Activated CD4-positive, alpha-beta memory T cell treated with anti-CD3 and anti-CD28 coated beads for 36 hours (primary cell): ENCODE measurements at regions of chr2 and their contacts with region 1.

Region 1: GRCh38 chr2:38653715-38654527 is 12.0 kb upstream of the GALM start:
- DNase-seq: peak; percentile 89
- H3K4me3 Mint-ChIP-seq: peak overlapping the region; percentile 63
- H3K27ac Mint-ChIP-seq: peak overlapping the region; percentile 91
- H3K4me1 Mint-ChIP-seq: peaks cover 68% of the 10 kb centered on the region
- H3K27me3 Mint-ChIP-seq: no peaks in the 10 kb centered on the region

Region 2: GRCh38 chr2:38682008-38682575 is 28.2 kb after region 1 on chr2:
- CTCF ChIA-PET with region 1: interaction called, 10 read pairs
- POLR2A ChIA-PET with region 1: interaction called, 12 read pairs
- intact Hi-C with region 1: loop called (anchors 1 kb)
- DNase-seq: peak; percentile 38
- H3K4me3 Mint-ChIP-seq: peak overlapping the region; percentile 63
- H3K27ac Mint-ChIP-seq: peak overlapping the region; percentile 84
- H3K4me1 Mint-ChIP-seq: peaks cover 78% of the 10 kb centered on the region
- H3K27me3 Mint-ChIP-seq: no peaks in the 10 kb centered on the region

Region 3: DNA sequence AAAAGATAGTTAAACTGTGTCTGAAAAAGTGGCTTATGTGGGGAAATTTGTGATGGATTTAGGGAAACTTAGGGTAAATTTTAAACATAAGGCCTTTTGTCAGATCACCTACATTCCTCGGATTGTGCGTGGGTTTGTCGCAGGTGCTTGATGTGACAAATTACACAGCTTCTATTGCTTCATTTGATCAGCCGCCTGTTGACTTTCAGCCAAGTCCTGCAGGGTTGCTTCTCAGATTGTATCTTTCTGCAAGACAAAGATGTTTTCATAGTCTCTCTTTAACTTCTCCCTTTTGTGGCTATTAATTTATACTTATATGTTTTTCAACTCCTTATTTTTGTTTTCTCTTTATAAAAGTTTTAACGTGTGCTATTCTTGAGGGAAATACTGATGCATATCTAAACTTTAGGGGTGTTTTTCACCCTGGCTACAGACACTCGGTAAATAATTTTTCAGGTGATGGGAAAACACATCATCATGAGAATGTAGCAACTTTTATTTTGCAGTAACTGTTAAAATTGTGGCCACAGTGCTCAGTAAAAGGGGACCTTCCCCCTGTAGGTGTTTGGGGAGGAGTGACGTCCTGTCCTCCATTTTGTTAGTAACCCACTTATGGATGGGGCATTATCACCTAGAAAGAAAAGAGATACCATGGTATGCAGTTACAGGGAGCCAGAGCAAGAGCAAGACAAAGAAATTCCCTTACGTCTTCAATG is 43.4 kb after region 1 on chr2:
- CTCF ChIA-PET with region 1: interaction called, 4 read pairs
- POLR2A ChIA-PET with region 1: interaction called, 5 read pairs
- intact Hi-C with region 1: loop called (anchors 1 kb)
- DNase-seq: peak; percentile 71
- H3K4me3 Mint-ChIP-seq: peak overlapping the region; percentile 34
- H3K27ac Mint-ChIP-seq: peak overlapping the region; percentile 94
- H3K4me1 Mint-ChIP-seq: peaks cover 86% of the 10 kb centered on the region
- H3K27me3 Mint-ChIP-seq: no peaks in the 10 kb centered on the region

Region 4: DNA sequence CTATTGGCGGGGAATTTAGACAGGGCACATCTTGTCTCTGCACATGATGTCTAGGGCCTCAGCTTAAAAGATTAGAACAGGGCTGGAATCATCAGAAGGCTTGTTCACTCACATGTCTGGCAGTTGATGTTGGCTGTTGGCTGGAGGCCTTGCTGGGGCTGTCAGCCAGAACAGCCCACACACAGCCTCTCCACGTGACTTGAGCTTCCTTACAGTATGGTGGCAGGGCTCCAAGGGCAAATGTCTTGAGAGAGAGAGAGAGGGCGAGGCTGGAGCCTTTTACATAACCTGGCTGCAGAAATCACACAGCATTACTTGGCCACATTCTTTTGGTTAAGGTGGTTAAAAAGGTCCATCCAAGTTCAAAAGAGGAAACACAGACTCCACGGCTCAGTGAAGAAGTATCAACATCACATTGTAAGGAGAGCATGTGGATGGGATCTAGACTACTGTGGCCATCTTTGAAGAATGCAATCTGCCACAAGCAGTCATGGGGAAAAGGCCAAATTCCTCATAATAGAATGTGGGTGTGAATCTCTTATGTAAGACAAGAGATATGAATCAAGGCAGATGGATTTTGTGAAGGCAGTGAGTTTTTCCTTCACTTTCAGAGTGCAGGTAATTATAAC is 66.8 kb after region 1 on chr2:
- CTCF ChIA-PET with region 1: interaction called, 17 read pairs
- POLR2A ChIA-PET with region 1: interaction called, 6 read pairs
- intact Hi-C with region 1: loop called (anchors 1 kb)
- DNase-seq: peak; percentile 47
- H3K4me3 Mint-ChIP-seq: peak overlapping the region; percentile 25
- H3K27ac Mint-ChIP-seq: peak overlapping the region; percentile 84
- H3K4me1 Mint-ChIP-seq: peaks cover 72% of the 10 kb centered on the region
- H3K27me3 Mint-ChIP-seq: no peaks in the 10 kb centered on the region

Region 5: DNA sequence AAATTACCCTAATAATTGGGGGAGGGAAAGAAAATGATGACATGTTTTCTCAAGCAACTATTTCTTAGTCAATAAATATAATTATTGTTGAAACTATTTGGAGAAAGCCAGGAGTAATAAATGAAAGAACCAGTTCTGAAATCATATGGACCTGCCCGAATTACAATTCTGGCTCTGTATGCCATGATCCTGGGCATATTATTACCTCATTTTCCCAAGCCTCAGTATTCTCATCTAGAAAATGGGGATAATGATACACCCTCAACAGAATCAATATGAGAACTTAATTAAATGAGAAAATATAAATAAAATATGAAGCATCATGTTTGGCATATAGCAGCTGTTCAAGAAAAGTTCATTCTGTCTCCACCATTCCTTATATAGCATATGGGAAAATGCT is 258.7 kb after region 1 on chr2:
- CTCF ChIA-PET with region 1: no interaction called
- POLR2A ChIA-PET with region 1: no interaction called
- intact Hi-C with region 1: no loop called
- DNase-seq: no peak
- H3K4me3 Mint-ChIP-seq: no peak overlapping the region
- H3K27ac Mint-ChIP-seq: no peak overlapping the region
- H3K4me1 Mint-ChIP-seq: peaks cover 14% of the 10 kb centered on the region
- H3K27me3 Mint-ChIP-seq: no peaks in the 10 kb centered on the region